Ascending aorta (tissue), 2 donors: ENCODE measurements at regions of chr9 and their contacts with region 1.

Region 1: GRCh38 chr9:109903515-109904138 is 123.6 kb downstream of the PALM2AKAP2 start:
- DNase-seq: no peak
- H3K4me3 ChIP-seq: no peak overlapping the region
- H3K27ac ChIP-seq: no peak overlapping the region
- H3K4me1 ChIP-seq: peaks cover 0 to 10% of the 10 kb centered on the region in 2 donors
- H3K27me3 ChIP-seq: no peaks in the 10 kb centered on the region
- CTCF ChIP-seq: peak; percentile 61 to 79 (median 76)

Region 2: DNA sequence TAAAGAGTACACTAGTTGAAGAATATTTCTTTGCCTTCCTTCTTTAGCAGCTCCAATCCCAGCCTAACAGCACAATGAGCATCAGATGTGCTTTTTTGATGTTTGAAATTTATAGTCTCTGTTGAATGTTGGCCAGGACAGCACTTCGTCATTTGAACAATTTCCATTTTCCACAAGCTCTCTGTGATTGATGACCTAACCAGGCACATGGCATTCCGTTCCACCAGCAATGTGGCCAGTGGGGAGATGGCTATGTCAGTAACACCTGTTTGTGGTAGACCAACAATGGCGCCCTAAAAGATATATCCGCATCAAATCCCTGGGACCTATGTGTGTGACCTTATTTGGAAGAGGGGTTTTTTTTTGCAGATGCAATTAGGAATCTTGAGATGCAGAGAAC is 56.9 kb before region 1 on chr9:
- intact Hi-C with region 1: no loop called
- DNase-seq: no peak
- H3K4me3 ChIP-seq: no peak overlapping the region
- H3K27ac ChIP-seq: no peak overlapping the region
- H3K4me1 ChIP-seq: peaks cover 0 to 10% of the 10 kb centered on the region in 2 donors
- H3K27me3 ChIP-seq: no peaks in the 10 kb centered on the region
- CTCF ChIP-seq: no peak

Region 3: GRCh38 chr9:110058304-110058953 is 154.8 kb after region 1 on chr9:
- intact Hi-C with region 1: loop called (anchors 2 kb)
- DNase-seq: no peak
- H3K4me3 ChIP-seq: no peak overlapping the region
- H3K27ac ChIP-seq: no peak overlapping the region
- H3K4me1 ChIP-seq: peaks cover 0 to 11% of the 10 kb centered on the region in 2 donors
- H3K27me3 ChIP-seq: no peaks in the 10 kb centered on the region
- CTCF ChIP-seq: peak; percentile 21 to 46 (median 39)

Region 4: DNA sequence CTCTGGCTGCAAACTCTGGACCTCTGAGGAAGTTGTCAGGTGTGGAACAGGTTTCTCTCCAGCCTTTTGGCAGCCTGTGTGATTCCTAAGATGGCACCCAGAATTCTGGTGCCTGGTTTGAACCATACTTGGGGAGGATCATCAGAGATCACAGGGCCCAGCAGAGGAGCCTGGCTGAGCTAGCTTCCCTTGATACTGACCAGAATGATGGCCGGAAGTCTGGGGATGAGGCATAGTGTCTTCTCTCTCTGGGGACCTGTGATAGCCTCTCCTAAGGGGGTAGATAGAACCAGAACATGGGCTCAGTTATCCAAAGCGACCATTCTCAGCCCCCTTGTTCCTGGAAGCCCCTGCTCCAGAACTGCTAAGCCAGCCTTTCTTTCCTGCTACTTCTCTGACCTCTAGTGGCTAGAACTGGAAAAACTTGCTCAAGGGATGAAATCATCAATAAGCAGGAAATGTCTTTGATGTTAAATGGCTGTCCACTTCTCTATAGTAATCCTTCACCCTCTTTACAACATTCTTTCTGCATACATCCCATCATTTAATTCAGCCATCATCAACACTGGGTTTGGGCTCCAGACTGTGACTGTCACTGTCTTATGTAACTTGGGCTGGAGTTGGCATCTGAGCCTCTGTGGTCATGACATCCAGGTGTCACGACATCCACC is 249.2 kb after region 1 on chr9:
- intact Hi-C with region 1: loop called (anchors 2 kb)
- DNase-seq: no peak
- H3K4me3 ChIP-seq: no peak overlapping the region
- H3K27ac ChIP-seq: peak overlapping the region; percentile 3 to 23
- H3K4me1 ChIP-seq: peaks cover 14 to 54% of the 10 kb centered on the region in 2 donors
- H3K27me3 ChIP-seq: no peaks in the 10 kb centered on the region
- CTCF ChIP-seq: peak; percentile 46 to 79 (median 49)

Region 5: DNA sequence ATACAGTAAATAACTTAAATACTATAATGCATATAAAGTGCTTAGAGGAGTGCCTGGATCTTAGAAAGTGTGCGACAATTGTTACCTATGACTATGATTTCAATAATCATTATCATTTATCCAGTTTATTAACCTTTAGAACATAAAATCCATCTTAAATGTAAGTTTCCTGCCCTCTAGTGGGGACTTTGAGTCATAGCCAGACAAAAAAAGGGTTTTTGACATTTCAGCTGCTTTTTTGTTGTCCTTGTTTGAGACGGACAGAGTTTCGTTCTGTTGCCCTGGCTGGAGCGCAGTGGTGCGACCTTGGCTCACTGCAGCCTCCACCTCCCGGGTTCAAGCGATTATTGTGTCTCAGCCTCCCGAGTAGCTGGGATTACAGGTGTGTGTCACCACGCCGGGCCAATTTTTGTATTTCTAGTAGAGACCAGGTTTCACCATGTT is 314.1 kb after region 1 on chr9:
- intact Hi-C with region 1: loop called (anchors 2 kb)
- DNase-seq: peak in 1 of 2 donors; percentile 52
- H3K4me3 ChIP-seq: no peak overlapping the region
- H3K27ac ChIP-seq: no peak overlapping the region
- H3K4me1 ChIP-seq: no peaks in the 10 kb centered on the region
- H3K27me3 ChIP-seq: no peaks in the 10 kb centered on the region
- CTCF ChIP-seq: peak; percentile 66 to 82 (median 73)

Region 6: DNA sequence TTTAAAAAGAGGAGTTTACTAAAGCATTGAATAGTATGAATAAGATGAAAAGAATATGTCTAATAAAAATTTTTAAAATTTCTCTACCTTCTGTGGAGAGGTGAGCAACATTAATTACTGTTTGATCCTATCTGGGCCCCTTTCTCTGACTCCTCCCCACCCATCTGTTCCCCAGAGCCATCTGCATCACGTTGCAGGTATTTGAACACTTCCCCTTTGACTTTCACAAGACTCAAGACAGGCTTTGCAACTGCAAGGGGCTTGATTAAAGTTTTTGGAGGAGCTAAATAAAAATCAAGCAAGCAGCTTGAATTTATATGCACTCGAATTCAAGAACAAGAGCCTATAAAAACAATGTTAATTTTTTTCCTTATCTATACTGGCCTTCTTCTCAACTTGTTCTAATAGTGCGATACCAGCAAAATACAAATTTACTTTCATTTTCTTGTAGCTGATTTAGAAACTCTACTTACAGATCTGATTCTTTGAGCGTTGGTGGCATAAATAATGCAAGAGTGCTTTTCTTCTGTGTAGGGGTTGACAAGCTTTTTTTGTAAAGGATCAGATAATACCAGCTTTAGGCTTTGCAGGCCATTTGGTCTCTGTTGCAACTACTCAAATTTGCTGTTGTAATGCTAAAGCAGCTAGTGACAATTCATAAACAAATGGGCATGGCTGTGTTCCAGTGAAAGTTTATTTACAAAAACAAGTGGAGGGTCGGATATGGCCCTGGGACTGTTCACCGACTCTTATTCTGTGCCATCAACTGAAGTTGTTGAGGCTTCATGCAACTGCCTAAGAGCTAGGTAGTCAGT is 412.8 kb after region 1 on chr9:
- intact Hi-C with region 1: no loop called
- DNase-seq: no peak
- H3K4me3 ChIP-seq: peak overlapping the region in 1 of 2 donors; percentile 27
- H3K27ac ChIP-seq: no peak overlapping the region
- H3K4me1 ChIP-seq: no peaks in the 10 kb centered on the region
- H3K27me3 ChIP-seq: no peaks in the 10 kb centered on the region
- CTCF ChIP-seq: no peak